HepG2 (cell line): ENCODE measurements at regions of chr1 and their contacts with region 1.

Region 1: GRCh38 chr1:177948336-177948972 is 21.4 kb downstream of the SEC16B start:
- DNase-seq: peak; percentile 48
- ATAC-seq: peak; percentile 65
- H3K4me3 ChIP-seq: no peak overlapping the region
- H3K27ac ChIP-seq: no peak overlapping the region
- H3K4me1 ChIP-seq: 0 out of 2 replicates have a peak, but pooled peaks cover 5% of the 10 kb centered on the region
- H3K27me3 ChIP-seq: no peaks in the 10 kb centered on the region
- CTCF ChIP-seq: peak; percentile 79
- EP300 ChIP-seq: no peak
- POLR2A ChIP-seq: no peak
- RAD21 ChIP-seq: peak; percentile 56; the same call in 1 of the 2 replicates

Region 2: GRCh38 chr1:176897350-176898236 is 1050.9 kb before region 1 on chr1:
- CTCF ChIA-PET with region 1: interaction called, 10 read pairs
- POLR2A ChIA-PET with region 1: no interaction called
- in situ Hi-C with region 1: loop called (anchors 25 kb)
- intact Hi-C with region 1: loop called (anchors 1 kb)
- DNase-seq: peak; percentile 56
- ATAC-seq: peak; percentile 94
- H3K4me3 ChIP-seq: no peak overlapping the region
- H3K27ac ChIP-seq: no peak overlapping the region
- H3K4me1 ChIP-seq: peaks cover 6% of the 10 kb centered on the region; the same call in 1 of the 2 replicates
- H3K27me3 ChIP-seq: peaks cover 0 to 4% of the 10 kb centered on the region in 2 experiments; a peak in 2 of 5 replicates
- CTCF ChIP-seq: peak; percentile 83
- EP300 ChIP-seq: no peak
- POLR2A ChIP-seq: no peak
- RAD21 ChIP-seq: no peak; the same call in 1 of the 2 replicates

Region 3: DNA sequence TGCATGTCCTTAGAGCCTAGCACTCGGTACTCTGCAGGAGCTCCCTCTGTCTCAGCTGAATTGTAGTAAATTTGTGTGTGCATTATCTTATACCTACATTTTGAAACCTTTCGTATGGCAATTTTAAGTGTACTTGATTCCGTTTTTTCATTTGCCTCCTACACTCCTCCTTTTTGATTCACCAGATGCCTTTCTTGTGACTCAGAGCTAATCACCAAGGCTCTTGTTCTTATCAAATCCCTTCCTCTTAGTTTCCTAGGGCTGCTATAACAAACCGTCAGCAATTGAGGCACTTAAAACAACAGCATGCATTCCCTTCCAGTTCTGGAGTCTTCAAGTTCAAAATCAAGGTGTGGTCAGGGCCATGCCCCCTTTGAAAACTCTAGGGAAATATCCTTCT is 1045.0 kb before region 1 on chr1:
- CTCF ChIA-PET with region 1: no interaction called
- POLR2A ChIA-PET with region 1: no interaction called
- in situ Hi-C with region 1: loop called (anchors 25 kb)
- intact Hi-C with region 1: no loop called
- DNase-seq: no peak
- ATAC-seq: no peak
- H3K4me3 ChIP-seq: no peak overlapping the region
- H3K27ac ChIP-seq: no peak overlapping the region
- H3K4me1 ChIP-seq: no peaks in the 10 kb centered on the region
- H3K27me3 ChIP-seq: peaks cover 0 to 26% of the 10 kb centered on the region in 2 experiments; a peak in 2 of 5 replicates
- CTCF ChIP-seq: no peak
- EP300 ChIP-seq: no peak
- POLR2A ChIP-seq: no peak
- RAD21 ChIP-seq: no peak

Region 4: DNA sequence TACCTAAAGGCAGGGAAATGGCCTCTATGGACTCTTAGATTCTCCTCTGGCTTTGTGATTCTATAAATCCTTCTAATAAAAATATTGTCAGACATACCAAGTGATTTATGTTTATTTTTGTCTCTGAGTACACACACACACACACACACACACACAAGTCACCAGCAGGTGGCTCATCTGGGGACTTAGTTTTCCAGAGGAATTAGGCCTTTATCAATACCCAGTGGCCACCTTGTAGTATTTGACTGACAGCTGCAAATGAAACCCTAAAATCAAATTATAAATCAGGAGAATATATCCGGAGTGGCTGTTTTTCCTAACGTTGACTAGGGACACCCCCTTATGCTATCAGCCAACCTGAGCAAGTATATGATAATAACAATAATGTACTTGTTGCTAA is 519.2 kb before region 1 on chr1:
- CTCF ChIA-PET with region 1: no interaction called
- POLR2A ChIA-PET with region 1: no interaction called
- in situ Hi-C with region 1: no loop called
- intact Hi-C with region 1: loop called (anchors 5 kb)
- DNase-seq: no peak
- ATAC-seq: no peak
- H3K4me3 ChIP-seq: no peak overlapping the region
- H3K27ac ChIP-seq: no peak overlapping the region
- H3K4me1 ChIP-seq: no peaks in the 10 kb centered on the region
- H3K27me3 ChIP-seq: no peaks in the 10 kb centered on the region
- CTCF ChIP-seq: no peak
- EP300 ChIP-seq: no peak
- POLR2A ChIP-seq: no peak
- RAD21 ChIP-seq: no peak

Region 5: GRCh38 chr1:177780096-177780700 is 168.3 kb before region 1 on chr1:
- CTCF ChIA-PET with region 1: no interaction called
- POLR2A ChIA-PET with region 1: no interaction called
- in situ Hi-C with region 1: no loop called
- intact Hi-C with region 1: loop called (anchors 1 kb)
- DNase-seq: peak; percentile 63
- ATAC-seq: peak; percentile 84
- H3K4me3 ChIP-seq: no peak overlapping the region
- H3K27ac ChIP-seq: no peak overlapping the region
- H3K4me1 ChIP-seq: no peaks in the 10 kb centered on the region
- H3K27me3 ChIP-seq: no peaks in the 10 kb centered on the region
- CTCF ChIP-seq: peak; percentile 72
- EP300 ChIP-seq: no peak
- POLR2A ChIP-seq: no peak
- RAD21 ChIP-seq: peak; percentile 58

Region 6: DNA sequence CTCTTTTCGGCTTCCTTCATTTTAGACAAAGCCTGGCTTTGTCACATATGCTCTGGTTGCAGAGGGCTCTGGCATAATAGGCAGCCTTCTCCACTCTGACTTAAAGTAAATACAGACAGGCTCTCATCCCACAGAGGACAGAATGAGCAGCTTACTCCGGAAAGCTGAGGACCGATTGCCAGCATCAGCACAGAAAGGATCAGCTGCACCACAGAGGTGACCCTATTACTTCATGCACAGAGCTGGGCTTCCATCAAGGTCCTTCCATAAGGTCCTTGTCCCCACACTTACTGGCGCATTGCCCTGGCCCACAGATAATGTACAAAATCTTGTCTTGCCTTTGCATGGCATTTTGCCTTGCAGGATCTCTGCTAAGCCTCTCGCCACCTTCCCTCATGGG is 46.2 kb before region 1 on chr1:
- CTCF ChIA-PET with region 1: no interaction called
- POLR2A ChIA-PET with region 1: no interaction called
- in situ Hi-C with region 1: no loop called
- intact Hi-C with region 1: no loop called
- DNase-seq: no peak
- ATAC-seq: no peak
- H3K4me3 ChIP-seq: no peak overlapping the region
- H3K27ac ChIP-seq: no peak overlapping the region
- H3K4me1 ChIP-seq: peaks cover 4% of the 10 kb centered on the region
- H3K27me3 ChIP-seq: peaks cover 2 to 13% of the 10 kb centered on the region in 2 experiments; a peak in 4 of 5 replicates
- CTCF ChIP-seq: no peak
- EP300 ChIP-seq: no peak
- POLR2A ChIP-seq: no peak
- RAD21 ChIP-seq: no peak

Region 7: DNA sequence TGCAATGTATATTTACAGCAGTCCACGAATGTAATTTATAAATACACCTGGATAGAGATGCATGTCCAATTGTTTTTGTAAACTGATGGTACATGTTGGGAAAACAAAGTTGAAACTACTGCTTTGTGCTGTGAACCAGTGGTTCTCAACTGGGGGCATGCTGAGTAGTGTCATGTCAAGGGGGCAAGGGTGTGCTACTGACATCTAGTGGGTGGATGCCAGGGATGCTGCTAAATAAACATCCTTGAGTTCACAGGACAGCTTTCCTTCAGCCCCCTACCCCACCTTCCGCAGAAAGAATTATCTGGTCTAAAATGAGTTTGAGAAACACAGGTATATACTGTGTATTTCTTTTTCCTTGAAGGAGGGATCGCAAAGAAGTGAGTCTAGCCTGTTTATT is 241.4 kb after region 1 on chr1:
- CTCF ChIA-PET with region 1: interaction called, 8 read pairs
- POLR2A ChIA-PET with region 1: no interaction called
- in situ Hi-C with region 1: no loop called
- intact Hi-C with region 1: loop called (anchors 5 kb)
- DNase-seq: peak; percentile 51
- ATAC-seq: peak; percentile 86
- H3K4me3 ChIP-seq: no peak overlapping the region
- H3K27ac ChIP-seq: no peak overlapping the region
- H3K4me1 ChIP-seq: peaks cover 4% of the 10 kb centered on the region; the same call in 1 of the 2 replicates
- H3K27me3 ChIP-seq: no peaks in the 10 kb centered on the region
- CTCF ChIP-seq: peak; percentile 86
- EP300 ChIP-seq: no peak
- POLR2A ChIP-seq: no peak
- RAD21 ChIP-seq: peak; percentile 70

Region 8: DNA sequence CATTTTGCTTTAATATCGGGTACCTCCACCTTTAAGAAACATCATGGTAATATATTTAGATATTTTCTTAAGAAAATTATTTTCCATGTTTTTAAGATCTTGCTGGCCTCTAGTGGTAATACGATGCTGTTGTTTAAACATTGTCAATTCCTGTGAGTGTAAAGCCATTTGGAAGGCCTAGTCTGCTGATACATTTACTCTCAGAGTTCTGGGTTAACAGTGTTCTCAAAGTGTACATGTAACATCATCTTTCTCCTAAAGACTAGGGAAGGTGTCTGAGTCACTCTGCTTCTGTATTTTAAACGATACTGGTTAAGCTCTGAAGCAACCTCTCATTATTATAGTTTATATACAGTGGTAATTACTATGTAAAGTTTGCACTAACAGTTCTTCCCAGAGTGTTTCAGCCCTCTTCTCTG is 334.5 kb after region 1 on chr1:
- CTCF ChIA-PET with region 1: no interaction called
- POLR2A ChIA-PET with region 1: no interaction called
- in situ Hi-C with region 1: no loop called
- intact Hi-C with region 1: loop called (anchors 2 kb)
- DNase-seq: peak; percentile 25
- ATAC-seq: no peak
- H3K4me3 ChIP-seq: no peak overlapping the region
- H3K27ac ChIP-seq: no peak overlapping the region
- H3K4me1 ChIP-seq: peaks cover 7% of the 10 kb centered on the region; the same call in 1 of the 2 replicates
- H3K27me3 ChIP-seq: no peaks in the 10 kb centered on the region
- CTCF ChIP-seq: peak; percentile 49
- EP300 ChIP-seq: no peak
- POLR2A ChIP-seq: no peak
- RAD21 ChIP-seq: no peak